A673 (cell line): ENCODE measurements at regions of chr22 and their contacts with region 1.

Region 1: DNA sequence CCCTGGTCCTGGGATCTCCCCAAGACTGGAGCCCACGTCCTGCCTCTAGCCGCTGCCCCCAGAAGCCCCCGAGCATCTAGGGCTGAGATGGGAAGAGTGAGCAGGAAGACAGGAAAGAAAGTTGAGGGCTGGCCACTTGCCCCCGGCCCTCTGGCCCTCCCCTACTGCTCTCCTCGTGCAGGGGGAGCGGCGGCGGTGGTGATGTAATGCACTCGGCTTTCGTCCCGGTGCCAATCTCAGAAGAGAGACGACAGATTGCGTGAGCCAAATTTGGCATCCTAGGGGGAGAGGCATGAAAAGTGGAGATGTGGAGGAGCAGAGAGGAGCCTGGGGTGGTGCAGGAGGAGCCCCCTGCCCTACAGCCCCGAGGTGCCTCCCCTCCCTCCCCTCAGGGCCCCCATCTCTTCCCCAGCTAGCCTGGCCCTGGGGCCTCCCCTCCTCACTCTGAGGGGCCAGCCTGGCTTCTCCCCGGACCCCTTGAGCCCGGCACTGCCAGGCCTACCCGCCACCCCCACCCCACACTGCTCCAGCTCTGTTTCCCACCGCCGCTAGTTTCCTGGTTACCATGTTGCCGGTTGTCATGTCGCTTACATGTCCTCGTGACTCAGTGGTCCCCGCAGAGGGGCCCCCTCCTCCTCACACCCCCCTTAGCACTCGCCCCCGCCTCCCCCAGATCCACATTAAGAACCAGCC is 2.5 kb downstream of the KCNJ4 start:
- DNase-seq: peak; percentile 53
- H3K4me3 ChIP-seq: no peak overlapping the region
- H3K27ac ChIP-seq: no peak overlapping the region
- H3K4me1 ChIP-seq: peaks cover 10% of the 10 kb centered on the region
- H3K27me3 ChIP-seq: peaks cover 8% of the 10 kb centered on the region
- CTCF ChIP-seq: no peak

Region 2: DNA sequence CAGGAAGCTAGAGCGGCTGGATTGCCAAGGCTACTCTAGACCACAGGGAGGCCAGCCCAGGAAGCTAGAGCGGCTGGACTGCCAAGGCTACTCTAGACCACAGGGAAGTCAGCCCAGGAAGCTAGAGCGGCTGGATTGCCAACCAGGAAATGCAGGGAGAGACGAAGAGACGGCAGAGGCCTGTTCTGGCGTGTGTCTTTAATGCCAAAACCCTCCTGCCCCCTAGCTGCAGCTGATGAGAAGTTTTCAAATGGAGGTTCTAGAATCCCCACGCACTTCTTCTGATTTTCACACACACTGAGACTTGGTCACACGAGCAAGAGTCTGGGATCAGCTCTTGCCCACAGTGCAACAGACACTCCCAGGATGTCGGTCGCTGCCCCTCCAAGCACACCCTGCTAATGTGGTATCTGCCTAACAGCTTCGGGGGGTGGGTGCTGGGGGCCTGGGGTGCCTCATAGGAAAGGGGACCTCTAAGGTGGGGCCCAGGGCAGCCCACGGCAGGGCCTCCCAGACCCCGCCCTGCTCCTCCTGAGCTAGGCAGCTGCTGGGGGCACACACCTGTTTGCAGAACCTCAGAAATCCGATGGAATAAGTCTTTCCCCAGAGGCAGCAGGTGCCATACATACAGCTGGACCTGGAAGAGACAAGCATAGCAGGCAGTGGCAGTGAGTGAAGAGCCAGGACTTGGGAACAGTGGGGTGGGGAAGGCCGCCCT is 222.3 kb before region 1 on chr22:
- CTCF ChIA-PET with region 1: no interaction called
- POLR2A ChIA-PET with region 1: no interaction called
- intact Hi-C with region 1: no loop called
- DNase-seq: peak; percentile 62
- H3K4me3 ChIP-seq: no peak overlapping the region
- H3K27ac ChIP-seq: no peak overlapping the region
- H3K4me1 ChIP-seq: no peaks in the 10 kb centered on the region
- H3K27me3 ChIP-seq: no peaks in the 10 kb centered on the region
- CTCF ChIP-seq: peak; percentile 55

Region 3: DNA sequence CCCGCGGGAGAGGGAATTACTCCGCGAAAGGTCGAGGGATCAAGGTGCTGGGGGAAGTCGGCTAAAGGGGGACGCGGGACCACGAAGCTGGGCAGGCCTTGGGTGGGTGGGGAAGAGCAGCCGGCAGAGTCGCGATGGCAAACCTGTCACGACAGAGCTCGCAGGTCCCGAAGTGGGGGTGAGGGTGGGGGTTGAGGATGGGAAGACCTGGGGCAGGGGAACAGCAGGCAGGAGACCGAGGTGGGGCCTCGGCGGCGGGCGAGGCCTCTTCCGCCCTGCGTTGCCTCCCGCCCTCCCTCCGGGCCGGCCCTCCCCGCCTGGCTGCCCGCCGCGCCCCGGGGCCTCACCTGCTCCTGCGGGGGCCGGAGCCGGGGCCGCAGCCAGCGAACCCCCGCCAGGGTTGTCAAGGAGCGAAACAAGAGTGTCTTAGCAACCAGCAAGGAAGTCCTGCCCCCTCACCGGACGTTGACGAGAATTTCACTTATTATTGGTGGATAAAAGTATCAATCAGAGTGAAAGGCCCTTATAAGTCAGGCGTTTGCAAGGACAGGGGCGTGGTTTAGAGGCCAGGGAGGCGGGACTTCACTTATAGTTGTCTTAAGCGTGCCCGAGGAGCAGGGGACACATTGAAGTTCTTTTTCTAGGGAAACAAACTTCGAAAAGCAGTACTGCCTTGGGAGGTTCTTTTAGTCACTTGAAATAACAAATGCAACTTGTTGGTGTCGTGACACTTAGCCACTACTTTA is 341.4 kb after region 1 on chr22 and contains the start of gene DNAL4:
- CTCF ChIA-PET with region 1: no interaction called
- POLR2A ChIA-PET with region 1: interaction called, 10 read pairs
- intact Hi-C with region 1: no loop called
- DNase-seq: peak; percentile 99
- H3K4me3 ChIP-seq: peak within 1 kb of the TSS; percentile 69
- H3K27ac ChIP-seq: peak within 1 kb of the TSS; percentile 72
- H3K4me1 ChIP-seq: peaks cover 11% of the 10 kb centered on the region
- H3K27me3 ChIP-seq: no peaks in the 10 kb centered on the region
- CTCF ChIP-seq: no peak
- total RNA-seq, gene DNAL4: 51.7 and 59.1 TPM in 2 replicates